ENCODE measurements at regions of chr20 and their contacts with region 1.

Region 1: GRCh38 chr20:18287915-18288748 is at the start of gene ZNF133:
- DNase-seq: peak; percentile 99
- ATAC-seq: peak; percentile 96
- H3K4me3 Mint-ChIP-seq: peak within 1 kb of the TSS; percentile 92
- H3K27ac Mint-ChIP-seq: peak within 1 kb of the TSS; percentile 97
- H3K4me1 Mint-ChIP-seq: peaks cover 29% of the 10 kb centered on the region
- H3K27me3 Mint-ChIP-seq: peaks cover 16% of the 10 kb centered on the region
- CTCF ChIP-seq: no peak
- total RNA-seq, gene ZNF133: 7.7 and 8.0 TPM in 2 replicates

Region 2: DNA sequence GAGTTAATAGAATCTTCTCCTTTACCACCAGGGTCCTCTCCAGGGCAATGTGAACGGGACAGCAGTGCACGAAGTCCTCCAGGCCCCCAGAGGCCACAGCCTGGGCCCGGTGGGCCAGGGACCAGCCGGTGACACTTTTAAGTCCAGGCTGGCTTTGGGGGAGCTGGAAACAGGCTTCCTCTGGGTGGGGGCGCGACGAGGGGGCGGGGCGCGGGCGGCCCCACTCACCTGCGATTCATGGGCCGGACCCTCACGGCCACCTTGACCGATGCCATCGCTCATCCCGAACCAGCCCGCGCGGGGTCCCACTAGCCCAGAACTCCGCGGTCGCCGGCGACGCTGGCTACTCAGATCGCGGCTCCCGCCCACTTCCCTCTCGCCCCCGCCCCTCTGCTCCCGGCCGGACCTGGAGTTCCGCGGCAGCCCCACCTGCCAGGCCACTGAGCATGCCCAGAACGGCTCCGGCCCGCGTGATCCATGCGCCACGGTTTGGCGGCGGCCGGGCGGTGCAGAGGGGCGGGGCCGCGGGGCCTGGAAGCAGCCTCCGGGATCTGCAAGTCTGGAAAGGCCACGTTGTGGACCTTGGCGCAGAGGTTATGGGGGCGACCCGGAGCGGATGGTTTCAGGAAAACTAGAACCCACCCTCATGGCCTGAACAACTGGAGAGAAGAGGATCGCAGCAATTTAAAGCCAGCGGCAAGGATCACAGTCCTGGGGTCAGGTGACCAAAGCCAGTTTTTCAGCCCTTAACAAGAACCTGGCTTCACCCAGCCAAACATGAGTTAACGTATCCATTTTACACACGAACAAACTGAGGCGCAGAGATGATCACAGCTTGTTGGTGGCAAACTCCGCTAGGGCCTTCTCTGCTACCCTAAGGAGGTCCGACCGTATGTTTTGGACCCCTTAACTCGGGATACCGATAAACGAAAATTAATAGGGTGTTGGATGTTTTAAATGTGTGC is 1714.8 kb before region 1 on chr20 and contains the start of gene KIF16B:
- CTCF ChIA-PET with region 1: no interaction called
- POLR2A ChIA-PET with region 1: no interaction called
- intact Hi-C with region 1: loop called (anchors 5 kb)
- DNase-seq: peak; percentile 93
- ATAC-seq: peak; percentile 90
- H3K4me3 Mint-ChIP-seq: peak within 1 kb of the TSS; percentile 94
- H3K27ac Mint-ChIP-seq: peak within 1 kb of the TSS; percentile 69
- H3K4me1 Mint-ChIP-seq: peaks cover 42% of the 10 kb centered on the region
- H3K27me3 Mint-ChIP-seq: no peaks in the 10 kb centered on the region
- CTCF ChIP-seq: no peak
- total RNA-seq, gene KIF16B: 7.2 and 9.1 TPM in 2 replicates

Region 3: GRCh38 chr20:18466894-18467730 is 179.0 kb after region 1 on chr20 and contains the starts of genes DZANK1 and POLR3F:
- CTCF ChIA-PET with region 1: no interaction called
- POLR2A ChIA-PET with region 1: interaction called, 19 read pairs
- intact Hi-C with region 1: loop called (anchors 1 kb)
- DNase-seq: peak; percentile 88
- ATAC-seq: peak; percentile 96
- H3K4me3 Mint-ChIP-seq: peak within 1 kb of the TSS; percentile 99
- H3K27ac Mint-ChIP-seq: peak within 1 kb of the TSS; percentile 95
- H3K4me1 Mint-ChIP-seq: peaks cover 27% of the 10 kb centered on the region
- H3K27me3 Mint-ChIP-seq: no peaks in the 10 kb centered on the region
- CTCF ChIP-seq: no peak
- total RNA-seq, gene DZANK1: 5.3 and 6.0 TPM in 2 replicates
- total RNA-seq, gene POLR3F: 13.3 and 14.5 TPM in 2 replicates

Region 4: GRCh38 chr20:18488301-18488700 is 200.2 kb after region 1 on chr20:
- CTCF ChIA-PET with region 1: no interaction called
- POLR2A ChIA-PET with region 1: no interaction called
- intact Hi-C with region 1: no loop called
- DNase-seq: no peak
- ATAC-seq: no peak
- H3K4me3 Mint-ChIP-seq: no peak overlapping the region
- H3K27ac Mint-ChIP-seq: no peak overlapping the region
- H3K4me1 Mint-ChIP-seq: no peaks in the 10 kb centered on the region
- H3K27me3 Mint-ChIP-seq: no peaks in the 10 kb centered on the region
- CTCF ChIP-seq: no peak

Region 5: GRCh38 chr20:18507218-18508021 is 219.3 kb after region 1 on chr20 and contains the start of gene SEC23B:
- CTCF ChIA-PET with region 1: no interaction called
- POLR2A ChIA-PET with region 1: interaction called, 32 read pairs
- intact Hi-C with region 1: loop called (anchors 1 kb)
- DNase-seq: peak; percentile 92
- ATAC-seq: peak; percentile 92
- H3K4me3 Mint-ChIP-seq: peak within 1 kb of the TSS; percentile 100
- H3K27ac Mint-ChIP-seq: peak within 1 kb of the TSS; percentile 100
- H3K4me1 Mint-ChIP-seq: peaks cover 36% of the 10 kb centered on the region
- H3K27me3 Mint-ChIP-seq: peaks cover 2% of the 10 kb centered on the region
- CTCF ChIP-seq: no peak
- total RNA-seq, gene SEC23B: 52.0 and 56.6 TPM in 2 replicates

Region 6: GRCh38 chr20:18587665-18588573 is 299.8 kb after region 1 on chr20 and contains the start of gene DTD1:
- CTCF ChIA-PET with region 1: no interaction called
- POLR2A ChIA-PET with region 1: no interaction called
- intact Hi-C with region 1: loop called (anchors 1 kb)
- DNase-seq: peak; percentile 88
- ATAC-seq: peak; percentile 95
- H3K4me3 Mint-ChIP-seq: peak within 1 kb of the TSS; percentile 93
- H3K27ac Mint-ChIP-seq: peak within 1 kb of the TSS; percentile 90
- H3K4me1 Mint-ChIP-seq: peaks cover 24% of the 10 kb centered on the region
- H3K27me3 Mint-ChIP-seq: peaks cover 9% of the 10 kb centered on the region
- CTCF ChIP-seq: no peak
- total RNA-seq, gene DTD1: 26.3 and 27.5 TPM in 2 replicates